Psoas muscle (tissue), 8 donors: ENCODE measurements at regions of chr18 and their contacts with region 1.

Region 1: DNA sequence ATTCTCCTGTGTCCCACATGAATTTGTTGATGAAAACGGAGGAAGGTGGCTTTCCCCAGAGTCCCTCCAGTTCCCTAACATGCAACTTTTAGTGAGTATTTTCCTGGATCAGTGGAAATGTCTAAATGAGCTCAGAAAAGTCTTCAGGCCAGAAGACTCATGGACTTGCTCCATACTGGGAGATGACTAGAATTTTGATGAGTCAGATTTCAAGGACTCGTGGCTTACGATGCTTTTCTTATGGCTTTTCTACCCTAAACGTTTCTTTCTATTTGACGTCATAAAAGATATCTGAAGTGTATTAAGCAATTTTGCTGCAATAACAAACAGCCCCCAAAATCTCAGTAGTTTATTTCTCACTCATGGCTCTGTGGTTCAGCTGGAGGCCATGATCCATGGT is 397.6 kb downstream of the FBXO15 start:
- DNase-seq: no peak
- ATAC-seq: no peak
- H3K4me3 ChIP-seq: no peak overlapping the region
- H3K27ac ChIP-seq: no peak overlapping the region
- H3K4me1 ChIP-seq: no peaks in the 10 kb centered on the region
- H3K27me3 ChIP-seq: no peaks in the 10 kb centered on the region
- CTCF ChIP-seq: no peak

Region 2: DNA sequence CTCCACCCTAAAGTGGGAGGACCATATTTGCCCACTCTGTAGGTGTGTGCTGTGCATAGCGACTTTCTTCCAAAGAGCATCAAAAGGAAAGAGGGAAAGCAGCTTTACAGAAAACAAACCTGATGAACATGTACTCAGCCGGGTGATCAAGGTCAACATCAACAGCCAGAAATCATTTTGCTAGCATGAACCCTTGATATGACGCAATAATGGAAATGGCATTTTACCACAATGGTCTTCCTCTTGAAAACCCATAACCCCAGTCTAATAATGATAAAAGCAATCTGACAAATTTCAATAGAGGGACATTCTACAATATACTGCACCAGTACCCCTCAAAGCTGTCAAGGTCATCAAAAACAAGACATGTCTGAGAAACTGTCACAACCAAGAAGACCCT is 47.4 kb after region 1 on chr18:
- intact Hi-C with region 1: loop called in 1 of 2 experiments (anchors 2 kb)
- DNase-seq: no peak
- ATAC-seq: no peak
- H3K4me3 ChIP-seq: no peak overlapping the region
- H3K27ac ChIP-seq: no peak overlapping the region
- H3K4me1 ChIP-seq: no peaks in the 10 kb centered on the region
- H3K27me3 ChIP-seq: no peaks in the 10 kb centered on the region
- CTCF ChIP-seq: no peak